Mammary epithelial cell (primary cell): ENCODE measurements at regions of chr5 and their contacts with region 1.

Region 1: DNA sequence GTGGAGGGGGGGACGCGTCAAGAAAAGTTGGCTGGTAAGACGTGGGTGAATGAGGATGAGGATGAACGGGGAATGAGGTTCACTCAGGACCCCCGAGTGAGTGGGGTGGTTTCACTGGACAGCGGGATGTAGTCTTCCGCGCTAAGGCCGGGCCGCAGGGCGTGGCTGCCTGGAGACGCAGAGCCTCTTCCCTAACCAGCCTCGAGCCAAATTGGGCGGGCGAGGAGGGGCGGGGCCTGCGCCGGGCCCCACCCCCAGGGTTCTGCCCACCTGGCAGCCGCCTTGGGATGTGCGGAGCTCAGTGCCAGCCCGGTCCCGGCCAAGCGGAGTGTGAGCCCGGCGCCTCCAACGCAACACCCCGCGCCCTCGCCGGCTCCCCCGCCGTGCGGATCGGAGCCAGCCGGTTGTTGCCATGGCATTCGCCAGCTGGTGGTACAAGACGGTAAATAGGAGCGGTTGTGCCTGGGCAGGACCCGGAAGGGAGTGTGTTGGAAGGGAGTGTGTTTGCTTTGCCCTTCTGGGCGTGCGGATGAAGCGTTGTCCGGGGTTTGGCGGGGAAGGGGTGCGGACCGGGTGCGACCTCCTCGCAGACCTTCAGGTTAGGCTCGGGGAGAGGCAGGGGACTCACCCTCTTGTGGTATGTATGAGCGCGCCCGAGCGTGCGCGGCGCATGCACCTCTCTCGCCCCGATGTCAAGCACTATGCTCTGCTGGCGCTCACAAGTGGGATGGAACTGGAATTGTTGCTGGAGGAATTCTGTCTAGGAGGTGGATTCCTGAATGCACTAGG is 743 bp downstream of the CAST start:
- DNase-seq: peak; percentile 94
- H3K4me3 ChIP-seq: peak overlapping the region; percentile 80 to 99 (median 94)
- H3K27ac ChIP-seq: peak overlapping the region; percentile 96
- H3K4me1 ChIP-seq: peaks cover 33% of the 10 kb centered on the region
- H3K27me3 ChIP-seq: no peaks in the 10 kb centered on the region
- CTCF ChIP-seq: peak in 1 of 2 donors; percentile 6

Region 2: DNA sequence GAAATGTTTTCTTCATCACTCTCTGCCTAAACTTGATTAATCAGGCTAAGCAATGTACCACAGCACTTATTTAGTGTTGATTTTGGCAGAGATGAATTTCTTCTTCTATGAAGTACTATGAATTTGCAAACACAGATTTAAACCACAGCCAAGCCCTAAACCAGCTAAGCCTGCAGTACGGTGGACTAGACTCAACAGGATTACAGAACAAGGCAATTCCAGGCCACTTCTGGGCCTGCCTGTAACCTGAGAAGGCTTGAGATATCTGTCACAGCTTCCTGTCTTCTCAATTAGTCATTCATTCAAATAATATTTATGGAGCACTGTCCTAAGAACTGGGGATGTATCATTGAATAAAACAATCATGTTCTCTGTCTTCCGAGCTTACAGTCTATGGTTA is 33.1 kb before region 1 on chr5:
- CTCF ChIA-PET with region 1: no interaction called
- dilution Hi-C with region 1: no loop called
- in situ Hi-C with region 1: no loop called
- intact Hi-C with region 1: loop called (anchors 2 kb)
- DNase-seq: peak; percentile 99
- H3K4me3 ChIP-seq: no peak overlapping the region
- H3K27ac ChIP-seq: peak overlapping the region; percentile 84
- H3K4me1 ChIP-seq: peaks cover 59% of the 10 kb centered on the region
- H3K27me3 ChIP-seq: no peaks in the 10 kb centered on the region
- CTCF ChIP-seq: no peak

Region 3: GRCh38 chr5:96687812-96688453 is 25.0 kb after region 1 on chr5:
- CTCF ChIA-PET with region 1: no interaction called
- dilution Hi-C with region 1: no loop called
- in situ Hi-C with region 1: no loop called
- intact Hi-C with region 1: loop called (anchors 1 kb)
- DNase-seq: no peak
- H3K4me3 ChIP-seq: no peak overlapping the region
- H3K27ac ChIP-seq: no peak overlapping the region
- H3K4me1 ChIP-seq: peaks cover 28% of the 10 kb centered on the region
- H3K27me3 ChIP-seq: no peaks in the 10 kb centered on the region
- CTCF ChIP-seq: peak; percentile 71 to 73

Region 4: GRCh38 chr5:96702503-96703383 is 39.8 kb after region 1 on chr5:
- CTCF ChIA-PET with region 1: no interaction called
- dilution Hi-C with region 1: no loop called
- in situ Hi-C with region 1: no loop called
- intact Hi-C with region 1: loop called (anchors 5 kb)
- DNase-seq: peak; percentile 97
- H3K4me3 ChIP-seq: peak overlapping the region; percentile 63 to 79 (median 68)
- H3K27ac ChIP-seq: peak overlapping the region; percentile 99
- H3K4me1 ChIP-seq: peaks cover 54% of the 10 kb centered on the region
- H3K27me3 ChIP-seq: no peaks in the 10 kb centered on the region
- CTCF ChIP-seq: no peak

Region 5: GRCh38 chr5:96718635-96719077 is 55.7 kb after region 1 on chr5:
- CTCF ChIA-PET with region 1: no interaction called
- dilution Hi-C with region 1: no loop called
- in situ Hi-C with region 1: no loop called
- intact Hi-C with region 1: loop called (anchors 1 kb)
- DNase-seq: peak; percentile 100
- H3K4me3 ChIP-seq: no peak overlapping the region
- H3K27ac ChIP-seq: peak overlapping the region; percentile 100
- H3K4me1 ChIP-seq: peaks cover 58% of the 10 kb centered on the region
- H3K27me3 ChIP-seq: no peaks in the 10 kb centered on the region
- CTCF ChIP-seq: no peak